ENCODE measurements at regions of chr3 and their contacts with region 1.

Region 1: DNA sequence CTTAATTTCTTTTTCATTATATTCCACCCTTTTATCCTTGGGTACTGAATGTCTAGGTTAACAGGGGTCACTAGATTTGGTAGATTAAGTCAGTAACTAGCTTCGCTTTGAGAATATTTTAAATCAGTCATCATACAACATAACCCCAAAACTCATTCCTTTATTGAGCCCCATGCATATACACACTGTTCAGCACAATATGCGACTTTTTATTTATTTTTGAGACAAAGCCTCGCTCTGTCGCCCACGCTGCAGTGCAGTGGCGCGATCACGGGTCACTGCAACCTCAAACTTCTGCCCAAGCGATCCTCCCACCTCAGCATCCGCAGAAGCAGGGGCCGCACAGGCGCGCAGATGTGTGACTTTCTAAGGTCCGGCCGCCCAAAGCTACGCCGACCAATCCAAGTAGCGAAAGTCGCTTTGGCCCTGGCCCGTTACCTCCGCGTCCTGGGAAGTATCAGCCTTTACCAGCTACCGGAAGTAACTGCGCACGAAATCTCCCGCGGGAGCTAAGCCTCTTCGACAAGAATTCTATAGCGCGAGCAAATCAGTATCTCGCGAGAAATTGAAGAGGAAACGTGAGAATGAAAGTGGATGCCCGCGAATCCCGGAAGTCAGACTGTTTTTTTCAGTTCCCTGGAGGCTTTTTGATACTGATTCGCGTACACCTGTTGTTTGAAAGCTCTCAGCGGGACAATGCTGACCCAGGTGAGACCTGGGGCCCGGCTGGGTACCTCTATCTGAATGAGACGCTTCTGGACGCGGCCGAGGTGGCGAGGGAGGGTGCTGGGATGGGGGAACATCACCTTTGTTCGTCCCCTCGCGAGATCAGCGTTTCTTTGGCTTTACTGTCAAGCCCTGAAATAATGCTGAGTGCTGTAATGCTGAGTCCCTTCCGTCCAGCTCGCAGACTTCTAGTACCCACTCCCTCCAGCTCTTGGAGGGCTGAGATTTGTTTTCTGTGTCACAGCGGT is at the starts of genes DHFR2 and NSUN3:
- DNase-seq: peak; percentile 90
- H3K4me3 ChIP-seq: peak within 1 kb of the TSS; percentile 80
- H3K27ac ChIP-seq: peak within 1 kb of the TSS; percentile 94
- H3K4me1 ChIP-seq: peaks cover 44% of the 10 kb centered on the region
- H3K27me3 ChIP-seq: no peaks in the 10 kb centered on the region
- CTCF ChIP-seq: no peak
- total RNA-seq, gene DHFR2: 3.9 TPM
- total RNA-seq, gene NSUN3: 5.9 TPM

Region 2: GRCh38 chr3:93910097-93910496 is 152.6 kb before region 1 on chr3:
- intact Hi-C with region 1: loop called (anchors 10 kb)
- DNase-seq: no peak
- H3K4me3 ChIP-seq: no peak overlapping the region
- H3K27ac ChIP-seq: peak overlapping the region; percentile 15
- H3K4me1 ChIP-seq: no peaks in the 10 kb centered on the region
- H3K27me3 ChIP-seq: no peaks in the 10 kb centered on the region
- CTCF ChIP-seq: no peak

Region 3: DNA sequence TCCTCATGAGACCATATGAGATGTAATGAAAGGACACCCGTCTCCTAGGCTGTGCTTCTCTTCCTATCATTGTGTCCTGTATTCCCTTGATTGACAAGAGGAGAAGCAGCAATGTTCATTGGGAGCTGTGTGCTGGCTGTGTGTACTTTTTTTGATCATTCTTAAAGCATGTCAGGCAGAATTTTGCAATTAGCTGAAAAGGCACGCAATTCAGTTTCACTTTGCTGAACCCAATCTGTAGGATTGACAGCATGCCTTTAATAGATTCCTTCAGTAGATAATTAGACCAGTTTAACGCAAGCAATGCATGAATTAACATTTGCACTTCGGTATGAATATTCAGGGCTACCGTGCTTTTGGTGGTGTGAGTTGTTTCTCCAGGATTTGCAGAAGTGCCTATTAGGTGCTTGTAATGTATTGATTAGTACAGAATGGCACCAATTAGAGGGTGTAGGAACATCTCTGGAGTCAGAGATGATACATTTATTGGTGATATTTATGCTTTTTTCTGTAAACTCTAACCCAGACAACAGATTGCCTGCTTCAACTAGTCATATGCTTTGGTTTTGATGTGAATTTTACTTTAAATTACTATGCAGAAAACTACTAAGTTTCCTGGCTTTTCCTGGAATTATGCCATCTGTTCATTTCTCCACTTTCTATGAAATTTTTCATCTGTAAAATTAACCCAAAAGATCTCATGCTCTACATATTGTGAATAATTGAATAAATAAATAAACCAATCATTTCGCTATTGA is 114.4 kb after region 1 on chr3:
- intact Hi-C with region 1: no loop called
- DNase-seq: no peak
- H3K4me3 ChIP-seq: no peak overlapping the region
- H3K27ac ChIP-seq: no peak overlapping the region
- H3K4me1 ChIP-seq: no peaks in the 10 kb centered on the region
- H3K27me3 ChIP-seq: no peaks in the 10 kb centered on the region
- CTCF ChIP-seq: no peak

Measured in left ventricle myocardium inferior (tissue), 1 donor.